Activated B cell treated with CpG ODN at 0.5 μM for 24 hours (primary cell): ENCODE measurements at regions of chr5 and their contacts with region 1.

Region 1: GRCh38 chr5:115544436-115545350 is at the start of gene FEM1C:
- DNase-seq: peak; percentile 94
- ATAC-seq: peak; percentile 95
- H3K4me3 Mint-ChIP-seq: peak within 1 kb of the TSS; percentile 98
- H3K27ac Mint-ChIP-seq: peak within 1 kb of the TSS; percentile 96
- H3K4me1 Mint-ChIP-seq: peaks cover 51% of the 10 kb centered on the region
- H3K27me3 Mint-ChIP-seq: no peaks in the 10 kb centered on the region
- CTCF ChIP-seq: no peak
- total RNA-seq, gene FEM1C: 19.1 and 19.8 TPM in 2 replicates

Region 2: DNA sequence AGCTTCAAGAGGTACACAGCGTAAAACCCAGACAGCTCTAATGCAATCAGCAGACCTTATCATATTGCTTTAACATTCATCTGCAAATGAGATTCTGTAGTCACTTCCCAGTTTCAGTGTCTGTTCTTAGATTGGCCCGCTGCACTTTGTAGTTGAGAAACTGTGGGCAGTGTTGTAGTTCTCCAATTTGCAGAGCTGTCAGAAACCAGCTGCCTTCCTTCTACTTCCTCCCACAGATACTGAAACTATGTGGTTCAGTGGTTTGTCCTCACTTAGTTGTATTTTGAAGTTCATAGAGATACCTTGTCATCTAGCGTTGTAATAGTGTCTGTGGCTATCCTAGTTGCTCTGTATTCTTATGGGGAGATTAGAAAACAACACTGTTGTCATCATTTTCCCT is 335.4 kb before region 1 on chr5:
- CTCF ChIA-PET with region 1: no interaction called
- POLR2A ChIA-PET with region 1: no interaction called
- intact Hi-C with region 1: loop called (anchors 2 kb)
- DNase-seq: peak; percentile 21
- ATAC-seq: peak; percentile 98
- H3K4me3 Mint-ChIP-seq: peak overlapping the region; percentile 66
- H3K27ac Mint-ChIP-seq: peak overlapping the region; percentile 81
- H3K4me1 Mint-ChIP-seq: peaks cover 20% of the 10 kb centered on the region
- H3K27me3 Mint-ChIP-seq: no peaks in the 10 kb centered on the region
- CTCF ChIP-seq: no peak

Region 3: GRCh38 chr5:115296124-115297022 is 248.3 kb before region 1 on chr5 and contains the start of gene CCDC112:
- CTCF ChIA-PET with region 1: no interaction called
- POLR2A ChIA-PET with region 1: interaction called, 4 read pairs
- intact Hi-C with region 1: loop called (anchors 1 kb)
- DNase-seq: peak; percentile 64
- ATAC-seq: peak; percentile 83
- H3K4me3 Mint-ChIP-seq: peak within 1 kb of the TSS; percentile 85
- H3K27ac Mint-ChIP-seq: peak within 1 kb of the TSS; percentile 47
- H3K4me1 Mint-ChIP-seq: peaks cover 13% of the 10 kb centered on the region
- H3K27me3 Mint-ChIP-seq: no peaks in the 10 kb centered on the region
- CTCF ChIP-seq: no peak
- total RNA-seq, gene CCDC112: 5.2 and 5.3 TPM in 2 replicates

Region 4: DNA sequence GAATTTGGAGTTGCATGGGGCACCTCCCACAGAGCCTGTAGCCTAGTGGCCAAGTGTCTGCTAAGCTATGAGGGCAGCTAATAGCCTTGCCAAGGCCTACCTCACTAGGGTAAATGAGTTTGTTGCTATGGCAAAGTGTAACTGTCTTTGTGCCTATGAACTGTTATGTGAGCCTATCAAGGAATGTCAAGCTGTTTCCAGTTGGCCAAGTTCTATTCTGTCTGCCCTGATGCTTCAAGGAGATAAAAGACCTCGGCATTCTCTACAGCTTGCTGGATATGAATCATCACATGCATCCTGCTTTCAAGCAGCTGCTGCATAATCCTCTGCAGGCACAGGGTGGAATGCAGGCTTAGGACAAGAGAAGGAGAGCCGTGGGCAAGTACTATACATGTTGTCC is 178.5 kb before region 1 on chr5:
- CTCF ChIA-PET with region 1: no interaction called
- POLR2A ChIA-PET with region 1: no interaction called
- intact Hi-C with region 1: no loop called
- DNase-seq: no peak
- ATAC-seq: no peak
- H3K4me3 Mint-ChIP-seq: no peak overlapping the region
- H3K27ac Mint-ChIP-seq: no peak overlapping the region
- H3K4me1 Mint-ChIP-seq: no peaks in the 10 kb centered on the region
- H3K27me3 Mint-ChIP-seq: no peaks in the 10 kb centered on the region
- CTCF ChIP-seq: no peak

Region 5: GRCh38 chr5:115496936-115497576 is 47.6 kb before region 1 on chr5:
- CTCF ChIA-PET with region 1: no interaction called
- POLR2A ChIA-PET with region 1: no interaction called
- intact Hi-C with region 1: no loop called
- DNase-seq: no peak
- ATAC-seq: no peak
- H3K4me3 Mint-ChIP-seq: no peak overlapping the region
- H3K27ac Mint-ChIP-seq: no peak overlapping the region
- H3K4me1 Mint-ChIP-seq: no peaks in the 10 kb centered on the region
- H3K27me3 Mint-ChIP-seq: peaks cover 8% of the 10 kb centered on the region
- CTCF ChIP-seq: no peak

Region 6: DNA sequence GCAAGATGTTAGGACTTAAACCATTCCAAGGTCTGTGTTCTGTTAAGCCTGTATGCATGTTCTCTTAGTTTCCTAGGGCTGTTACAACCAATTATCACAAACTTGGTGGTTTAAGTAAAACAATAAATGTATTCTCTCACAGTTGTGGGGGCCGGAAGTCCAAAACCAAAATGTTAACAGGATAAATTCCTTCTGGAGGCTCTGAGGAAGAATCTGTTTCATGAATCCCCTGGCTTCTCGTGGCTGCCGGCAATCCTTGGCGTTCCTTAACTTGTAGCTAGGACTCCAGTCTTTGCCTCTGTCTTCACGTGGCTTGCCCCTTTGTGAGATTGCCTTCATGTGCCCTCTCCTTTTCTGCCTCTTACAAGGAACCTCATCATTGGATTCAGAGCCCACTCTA is 30.5 kb before region 1 on chr5:
- CTCF ChIA-PET with region 1: no interaction called
- POLR2A ChIA-PET with region 1: no interaction called
- intact Hi-C with region 1: no loop called
- DNase-seq: no peak
- ATAC-seq: no peak
- H3K4me3 Mint-ChIP-seq: no peak overlapping the region
- H3K27ac Mint-ChIP-seq: no peak overlapping the region
- H3K4me1 Mint-ChIP-seq: no peaks in the 10 kb centered on the region
- H3K27me3 Mint-ChIP-seq: no peaks in the 10 kb centered on the region
- CTCF ChIP-seq: no peak

Region 7: GRCh38 chr5:115579747-115580173 is 35.1 kb after region 1 on chr5:
- CTCF ChIA-PET with region 1: interaction called, 4 read pairs
- POLR2A ChIA-PET with region 1: interaction called, 31 read pairs
- intact Hi-C with region 1: loop called (anchors 1 kb)
- DNase-seq: no peak
- ATAC-seq: peak; percentile 85
- H3K4me3 Mint-ChIP-seq: peak overlapping the region; percentile 74
- H3K27ac Mint-ChIP-seq: peak overlapping the region; percentile 83
- H3K4me1 Mint-ChIP-seq: peaks cover 50% of the 10 kb centered on the region
- H3K27me3 Mint-ChIP-seq: no peaks in the 10 kb centered on the region
- CTCF ChIP-seq: no peak

Region 8: GRCh38 chr5:115601701-115602590 is 57.3 kb after region 1 on chr5 and contains the start of gene TICAM2:
- CTCF ChIA-PET with region 1: interaction called, 3 read pairs
- POLR2A ChIA-PET with region 1: interaction called, 25 read pairs
- intact Hi-C with region 1: loop called (anchors 1 kb)
- DNase-seq: peak; percentile 68
- ATAC-seq: peak; percentile 80
- H3K4me3 Mint-ChIP-seq: peak within 1 kb of the TSS; percentile 88
- H3K27ac Mint-ChIP-seq: peak within 1 kb of the TSS; percentile 98
- H3K4me1 Mint-ChIP-seq: peaks cover 56% of the 10 kb centered on the region
- H3K27me3 Mint-ChIP-seq: no peaks in the 10 kb centered on the region
- CTCF ChIP-seq: no peak
- total RNA-seq, gene TICAM2: 12.4 and 13.3 TPM in 2 replicates

Region 9: GRCh38 chr5:116068028-116068632 is 523.4 kb after region 1 on chr5:
- CTCF ChIA-PET with region 1: no interaction called
- POLR2A ChIA-PET with region 1: no interaction called
- intact Hi-C with region 1: loop called (anchors 2 kb)
- DNase-seq: no peak
- ATAC-seq: no peak
- H3K4me3 Mint-ChIP-seq: no peak overlapping the region
- H3K27ac Mint-ChIP-seq: no peak overlapping the region
- H3K4me1 Mint-ChIP-seq: no peaks in the 10 kb centered on the region
- H3K27me3 Mint-ChIP-seq: no peaks in the 10 kb centered on the region
- CTCF ChIP-seq: peak; percentile 84

Region 10: GRCh38 chr5:116574367-116575325 is 1030.0 kb after region 1 on chr5 and contains the start of gene SEMA6A:
- CTCF ChIA-PET with region 1: no interaction called
- POLR2A ChIA-PET with region 1: no interaction called
- intact Hi-C with region 1: loop called (anchors 10 kb)
- DNase-seq: peak; percentile 46
- ATAC-seq: peak; percentile 69
- H3K4me3 Mint-ChIP-seq: peak within 1 kb of the TSS; percentile 83
- H3K27ac Mint-ChIP-seq: no peak within 1 kb of the TSS
- H3K4me1 Mint-ChIP-seq: peaks cover 42% of the 10 kb centered on the region
- H3K27me3 Mint-ChIP-seq: peaks cover 54% of the 10 kb centered on the region
- CTCF ChIP-seq: no peak
- total RNA-seq, gene SEMA6A: 0.20 TPM in 2 replicates